ENCODE measurements at regions of chr3 and their contacts with region 1.

Region 1: DNA sequence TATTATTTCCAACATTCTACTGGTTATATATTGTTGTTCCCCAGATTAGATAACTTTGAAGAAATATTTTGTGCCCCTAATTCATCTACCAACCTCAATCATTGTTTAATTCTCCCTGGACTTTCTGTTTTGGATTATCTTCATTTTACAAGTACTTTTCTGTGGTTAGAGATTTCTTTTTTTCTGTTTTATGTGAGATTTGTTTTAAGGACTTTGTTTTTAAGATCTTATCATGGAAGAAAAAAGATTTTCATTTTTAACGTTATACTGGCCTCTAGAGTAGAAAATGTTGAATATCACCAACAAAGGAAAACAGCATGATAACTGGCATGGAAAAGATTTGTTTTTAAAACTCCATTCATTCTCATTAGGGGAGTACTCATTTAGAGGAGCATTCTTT is 210.9 kb upstream of the KCNMB2 start:
- DNase-seq: peak; percentile 27
- H3K4me3 Mint-ChIP-seq: no peak overlapping the region
- H3K27ac Mint-ChIP-seq: no peak overlapping the region
- H3K4me1 Mint-ChIP-seq: peaks cover 5% of the 10 kb centered on the region
- H3K27me3 Mint-ChIP-seq: no peaks in the 10 kb centered on the region
- CTCF ChIP-seq: peak; percentile 37

Region 2: GRCh38 chr3:176514297-176514696 is 1811.0 kb before region 1 on chr3:
- CTCF ChIA-PET with region 1: no interaction called
- POLR2A ChIA-PET with region 1: no interaction called
- intact Hi-C with region 1: loop called (anchors 5 kb)
- DNase-seq: peak; percentile 54
- H3K4me3 Mint-ChIP-seq: no peak overlapping the region
- H3K27ac Mint-ChIP-seq: no peak overlapping the region
- H3K4me1 Mint-ChIP-seq: no peaks in the 10 kb centered on the region
- H3K27me3 Mint-ChIP-seq: no peaks in the 10 kb centered on the region
- CTCF ChIP-seq: peak; percentile 69

Region 3: DNA sequence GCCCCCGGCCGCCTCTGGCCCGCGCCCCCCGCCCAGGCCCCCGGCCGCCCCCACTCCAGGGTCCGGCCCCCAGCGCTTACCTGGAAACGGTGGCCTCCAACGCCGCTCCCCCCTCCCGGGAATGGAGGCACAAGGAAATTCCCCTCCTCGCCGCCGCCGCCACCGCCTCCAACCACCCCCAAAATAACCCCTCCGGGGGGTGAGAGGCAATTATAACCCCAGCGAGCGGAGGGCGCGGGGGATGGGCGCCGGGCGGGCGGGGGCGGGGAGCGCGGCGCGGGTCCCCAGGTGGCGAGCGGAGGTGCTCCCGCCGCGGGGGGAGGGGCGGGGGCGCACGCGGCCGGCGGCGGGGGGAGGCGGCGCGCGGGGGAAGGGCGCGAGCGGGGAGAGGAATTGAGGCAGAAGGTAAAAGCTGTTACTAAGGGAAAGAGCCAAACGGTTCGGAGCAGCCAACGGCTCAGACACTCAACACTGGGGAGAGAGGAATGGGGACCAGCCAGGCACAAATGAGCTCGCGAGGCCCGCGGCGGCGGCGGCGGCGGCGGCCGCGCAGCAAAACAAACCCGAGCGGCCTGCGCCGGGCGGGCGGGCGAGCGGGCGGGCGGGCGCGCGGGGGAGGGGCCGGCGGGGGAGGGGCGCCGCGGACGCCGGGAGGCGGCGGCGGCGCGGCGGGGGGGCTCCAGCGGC is 1128.1 kb before region 1 on chr3 and contains the start of gene TBL1XR1:
- CTCF ChIA-PET with region 1: no interaction called
- POLR2A ChIA-PET with region 1: interaction called, 8 read pairs
- intact Hi-C with region 1: loop called (anchors 2 kb)
- DNase-seq: peak; percentile 95
- H3K4me3 Mint-ChIP-seq: peak within 1 kb of the TSS; percentile 97
- H3K27ac Mint-ChIP-seq: peak within 1 kb of the TSS; percentile 89
- H3K4me1 Mint-ChIP-seq: peaks cover 30% of the 10 kb centered on the region
- H3K27me3 Mint-ChIP-seq: no peaks in the 10 kb centered on the region
- CTCF ChIP-seq: no peak
- total RNA-seq, gene TBL1XR1: 171 and 178 TPM in 2 replicates

Region 4: GRCh38 chr3:177835008-177835407 is 490.3 kb before region 1 on chr3:
- CTCF ChIA-PET with region 1: interaction called, 3 read pairs
- POLR2A ChIA-PET with region 1: interaction called, 4 read pairs
- intact Hi-C with region 1: loop called (anchors 10 kb)
- DNase-seq: peak; percentile 86
- H3K4me3 Mint-ChIP-seq: no peak overlapping the region
- H3K27ac Mint-ChIP-seq: peak overlapping the region; percentile 90
- H3K4me1 Mint-ChIP-seq: peaks cover 83% of the 10 kb centered on the region
- H3K27me3 Mint-ChIP-seq: no peaks in the 10 kb centered on the region
- CTCF ChIP-seq: no peak

Region 5: DNA sequence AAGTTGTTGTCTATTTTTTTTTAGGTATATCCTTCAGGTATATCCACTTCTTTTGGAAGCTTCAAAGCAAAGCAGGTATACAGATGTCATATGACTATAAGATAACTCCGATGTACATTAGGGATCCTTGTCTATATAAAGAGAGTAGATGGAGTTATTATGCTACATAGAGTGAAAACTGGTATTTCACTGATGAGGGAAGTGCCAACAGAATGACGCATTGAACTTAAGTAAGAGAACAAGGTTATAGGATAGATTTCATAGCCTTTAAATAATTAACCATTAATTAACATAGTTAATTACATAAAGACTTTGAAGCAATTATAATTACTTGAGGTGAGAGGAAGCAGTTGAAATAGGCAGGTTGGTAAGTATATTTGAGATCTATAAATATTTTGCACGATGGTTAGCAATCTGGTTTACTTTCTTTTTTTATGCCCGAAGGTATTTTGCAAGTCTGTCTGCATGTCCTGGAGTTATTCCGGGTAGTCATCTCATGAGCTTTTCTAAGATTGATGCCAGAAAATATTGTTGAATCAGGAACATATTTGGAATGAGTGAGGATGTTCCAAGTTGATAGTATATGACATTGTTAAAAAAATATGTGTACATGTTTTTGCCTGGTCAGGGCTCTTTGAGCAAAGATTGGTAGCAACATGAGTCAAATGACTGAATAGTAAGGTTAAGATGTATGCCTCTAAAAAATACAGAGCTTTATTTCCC is 88.6 kb before region 1 on chr3:
- CTCF ChIA-PET with region 1: interaction called, 5 read pairs
- POLR2A ChIA-PET with region 1: interaction called, 14 read pairs
- intact Hi-C with region 1: no loop called
- DNase-seq: peak; percentile 65
- H3K4me3 Mint-ChIP-seq: peak overlapping the region; percentile 70
- H3K27ac Mint-ChIP-seq: peak overlapping the region; percentile 83
- H3K4me1 Mint-ChIP-seq: peaks cover 24% of the 10 kb centered on the region
- H3K27me3 Mint-ChIP-seq: no peaks in the 10 kb centered on the region
- CTCF ChIP-seq: no peak

Measured in MCF 10A (cell line).